ENCODE measurements at regions of chr12 and their contacts with region 1.

Region 1: GRCh38 chr12:7026854-7027253 is 8.6 kb upstream of the LPCAT3 start:
- DNase-seq: no peak
- ATAC-seq: no peak
- H3K4me3 ChIP-seq: no peak overlapping the region
- H3K4me3 Mint-ChIP-seq: no peak overlapping the region
- H3K27ac ChIP-seq: no peak overlapping the region
- H3K27ac Mint-ChIP-seq: no peak overlapping the region
- H3K4me1 ChIP-seq: no peaks in the 10 kb centered on the region
- H3K4me1 Mint-ChIP-seq: no peaks in the 10 kb centered on the region
- H3K27me3 ChIP-seq: no peaks in the 10 kb centered on the region
- H3K27me3 Mint-ChIP-seq: no peaks in the 10 kb centered on the region
- CTCF ChIP-seq: no peak

Region 2: GRCh38 chr12:6914246-6914946 is 112.5 kb before region 1 on chr12 and contains the start of gene ENO2:
- CTCF ChIA-PET with region 1: no interaction called
- POLR2A ChIA-PET with region 1: no interaction called
- intact Hi-C with region 1: no loop called
- DNase-seq: peak; percentile 59 to 92 (median 89)
- ATAC-seq: peak; percentile 94
- H3K4me3 ChIP-seq: peak within 1 kb of the TSS; percentile 52 to 83
- H3K4me3 Mint-ChIP-seq: peak within 1 kb of the TSS; percentile 95
- H3K27ac ChIP-seq: peak within 1 kb of the TSS; percentile 77 to 88
- H3K27ac Mint-ChIP-seq: peak within 1 kb of the TSS; percentile 95
- H3K4me1 ChIP-seq: peaks cover 18% of the 10 kb centered on the region
- H3K4me1 Mint-ChIP-seq: peaks cover 31% of the 10 kb centered on the region
- H3K27me3 ChIP-seq: no peaks in the 10 kb centered on the region
- H3K27me3 Mint-ChIP-seq: no peaks in the 10 kb centered on the region
- CTCF ChIP-seq: no peak
- total RNA-seq, gene ENO2: 95.5 to 99.6 TPM

Region 3: GRCh38 chr12:6996040-6996441 is 30.8 kb before region 1 on chr12:
- CTCF ChIA-PET with region 1: no interaction called
- POLR2A ChIA-PET with region 1: no interaction called
- intact Hi-C with region 1: loop called in 1 of 2 experiments (anchors 2 kb)
- DNase-seq: no peak
- ATAC-seq: no peak
- H3K4me3 ChIP-seq: no peak overlapping the region
- H3K4me3 Mint-ChIP-seq: no peak overlapping the region
- H3K27ac ChIP-seq: no peak overlapping the region
- H3K27ac Mint-ChIP-seq: no peak overlapping the region
- H3K4me1 ChIP-seq: no peaks in the 10 kb centered on the region
- H3K4me1 Mint-ChIP-seq: peaks cover 5% of the 10 kb centered on the region
- H3K27me3 ChIP-seq: no peaks in the 10 kb centered on the region
- H3K27me3 Mint-ChIP-seq: no peaks in the 10 kb centered on the region
- CTCF ChIP-seq: no peak